Tibial artery (tissue), 4 donors: ENCODE measurements at regions of chr9 and their contacts with region 1.

Region 1: GRCh38 chr9:121059998-121060636 is 10.0 kb upstream of the C5 start:
- DNase-seq: no peak
- H3K4me3 ChIP-seq: no peak overlapping the region
- H3K27ac ChIP-seq: no peak overlapping the region
- H3K4me1 ChIP-seq: no peaks in the 10 kb centered on the region
- H3K27me3 ChIP-seq: no peaks in the 10 kb centered on the region
- CTCF ChIP-seq: peak; percentile 67 to 78

Region 2: GRCh38 chr9:120755827-120756434 is 304.2 kb before region 1 on chr9:
- intact Hi-C with region 1: loop called (anchors 5 kb)
- DNase-seq: peak in 1 of 2 donors; percentile 66
- H3K4me3 ChIP-seq: no peak overlapping the region
- H3K27ac ChIP-seq: peak overlapping the region in 1 of 2 donors; percentile 0
- H3K4me1 ChIP-seq: peaks cover 0 to 4% (median 0%) of the 10 kb centered on the region in 4 donors
- H3K27me3 ChIP-seq: no peaks in the 10 kb centered on the region
- CTCF ChIP-seq: peak; percentile 85 to 89

Region 3: GRCh38 chr9:120985810-120986222 is 74.3 kb before region 1 on chr9:
- intact Hi-C with region 1: loop called (anchors 10 kb)
- DNase-seq: no peak
- H3K4me3 ChIP-seq: no peak overlapping the region
- H3K27ac ChIP-seq: no peak overlapping the region
- H3K4me1 ChIP-seq: no peaks in the 10 kb centered on the region
- H3K27me3 ChIP-seq: no peaks in the 10 kb centered on the region
- CTCF ChIP-seq: peak; percentile 46 to 59